Mammary epithelial cell (primary cell): ENCODE measurements at regions of chr5 and their contacts with region 1.

Region 1: GRCh38 chr5:54624805-54625561 is 107.4 kb downstream of the SNX18 start:
- DNase-seq: no peak
- H3K4me3 ChIP-seq: no peak overlapping the region
- H3K27ac ChIP-seq: no peak overlapping the region
- H3K4me1 ChIP-seq: peaks cover 4% of the 10 kb centered on the region
- H3K27me3 ChIP-seq: no peaks in the 10 kb centered on the region
- CTCF ChIP-seq: no peak

Region 2: DNA sequence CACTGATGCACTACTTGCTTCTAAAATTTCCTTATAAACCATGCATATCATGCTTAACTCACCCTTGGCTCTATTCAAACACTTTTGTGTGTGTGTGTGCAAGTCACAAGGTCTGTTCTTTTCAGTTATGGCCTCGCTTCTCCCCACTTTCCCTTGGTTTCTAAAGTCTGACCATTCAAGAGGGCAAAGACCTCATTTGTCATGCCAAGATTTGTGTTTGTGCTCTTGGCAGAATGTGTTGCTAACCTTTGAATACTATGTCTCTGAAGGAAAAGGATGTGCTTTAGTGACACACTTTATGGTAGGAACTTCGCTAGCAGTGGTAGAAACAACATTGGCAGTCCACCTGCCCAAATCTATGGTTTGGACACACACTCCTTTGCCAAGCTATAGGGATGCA is 57.0 kb before region 1 on chr5:
- CTCF ChIA-PET with region 1: no interaction called
- dilution Hi-C with region 1: loop called (anchors 5 kb)
- in situ Hi-C with region 1: no loop called
- intact Hi-C with region 1: no loop called
- DNase-seq: no peak
- H3K4me3 ChIP-seq: no peak overlapping the region
- H3K27ac ChIP-seq: no peak overlapping the region
- H3K4me1 ChIP-seq: no peaks in the 10 kb centered on the region
- H3K27me3 ChIP-seq: no peaks in the 10 kb centered on the region
- CTCF ChIP-seq: no peak